Activated CD4-positive, alpha-beta memory T cell treated with anti-CD3 and anti-CD28 coated beads for 36 hours (primary cell): ENCODE measurements at regions of chr17 and their contacts with region 1.

Region 1: GRCh38 chr17:36089888-36090836 is at the start of gene CCL3:
- DNase-seq: peak; percentile 79
- H3K4me3 Mint-ChIP-seq: peak within 1 kb of the TSS; percentile 64
- H3K27ac Mint-ChIP-seq: peak within 1 kb of the TSS; percentile 74
- H3K4me1 Mint-ChIP-seq: peaks cover 56% of the 10 kb centered on the region
- H3K27me3 Mint-ChIP-seq: peaks cover 26% of the 10 kb centered on the region
- total RNA-seq, gene CCL3: 981 to 989 TPM

Region 2: GRCh38 chr17:36107660-36108059 is 17.5 kb after region 1 on chr17:
- CTCF ChIA-PET with region 1: interaction called, 4 read pairs
- POLR2A ChIA-PET with region 1: interaction called, 71 read pairs
- intact Hi-C with region 1: no loop called
- DNase-seq: no peak
- H3K4me3 Mint-ChIP-seq: no peak overlapping the region
- H3K27ac Mint-ChIP-seq: no peak overlapping the region
- H3K4me1 Mint-ChIP-seq: peaks cover 16% of the 10 kb centered on the region
- H3K27me3 Mint-ChIP-seq: peaks cover 19% of the 10 kb centered on the region

Region 3: DNA sequence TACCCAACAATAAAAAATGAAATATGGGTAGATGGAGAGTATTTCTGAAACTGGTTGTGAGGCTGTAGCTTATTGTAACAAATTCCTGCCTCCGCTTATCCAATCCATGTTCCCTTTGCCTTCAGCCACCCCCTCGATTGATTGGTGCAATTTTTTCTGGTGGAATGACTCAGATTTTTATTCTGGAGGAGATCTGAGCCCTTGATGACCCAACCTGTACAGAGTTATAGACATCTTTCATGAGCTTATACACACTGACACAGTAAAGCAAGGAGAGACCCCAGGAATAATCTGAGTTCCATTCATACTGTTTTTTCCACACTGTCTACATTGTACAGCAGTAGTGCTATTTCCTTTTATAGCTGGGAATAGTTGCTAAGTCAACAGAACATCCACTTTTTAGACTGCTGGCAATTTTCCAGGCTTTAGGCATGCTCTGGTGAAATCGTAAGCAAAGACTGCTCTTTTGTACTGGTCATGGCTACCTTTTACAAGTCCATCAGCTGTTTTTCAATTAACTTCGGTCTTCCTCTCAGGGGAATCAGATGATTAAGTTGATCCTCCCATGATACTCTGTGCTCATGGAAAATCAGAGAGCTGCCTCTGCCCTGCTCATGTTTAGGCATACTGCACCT is 43.6 kb after region 1 on chr17:
- CTCF ChIA-PET with region 1: no interaction called
- POLR2A ChIA-PET with region 1: no interaction called
- intact Hi-C with region 1: no loop called
- DNase-seq: no peak
- H3K4me3 Mint-ChIP-seq: no peak overlapping the region
- H3K27ac Mint-ChIP-seq: no peak overlapping the region
- H3K4me1 Mint-ChIP-seq: no peaks in the 10 kb centered on the region
- H3K27me3 Mint-ChIP-seq: peaks cover 27% of the 10 kb centered on the region